Heart left ventricle (tissue), 16 donors: ENCODE measurements at regions of chr2 and their contacts with region 1.

Region 1: DNA sequence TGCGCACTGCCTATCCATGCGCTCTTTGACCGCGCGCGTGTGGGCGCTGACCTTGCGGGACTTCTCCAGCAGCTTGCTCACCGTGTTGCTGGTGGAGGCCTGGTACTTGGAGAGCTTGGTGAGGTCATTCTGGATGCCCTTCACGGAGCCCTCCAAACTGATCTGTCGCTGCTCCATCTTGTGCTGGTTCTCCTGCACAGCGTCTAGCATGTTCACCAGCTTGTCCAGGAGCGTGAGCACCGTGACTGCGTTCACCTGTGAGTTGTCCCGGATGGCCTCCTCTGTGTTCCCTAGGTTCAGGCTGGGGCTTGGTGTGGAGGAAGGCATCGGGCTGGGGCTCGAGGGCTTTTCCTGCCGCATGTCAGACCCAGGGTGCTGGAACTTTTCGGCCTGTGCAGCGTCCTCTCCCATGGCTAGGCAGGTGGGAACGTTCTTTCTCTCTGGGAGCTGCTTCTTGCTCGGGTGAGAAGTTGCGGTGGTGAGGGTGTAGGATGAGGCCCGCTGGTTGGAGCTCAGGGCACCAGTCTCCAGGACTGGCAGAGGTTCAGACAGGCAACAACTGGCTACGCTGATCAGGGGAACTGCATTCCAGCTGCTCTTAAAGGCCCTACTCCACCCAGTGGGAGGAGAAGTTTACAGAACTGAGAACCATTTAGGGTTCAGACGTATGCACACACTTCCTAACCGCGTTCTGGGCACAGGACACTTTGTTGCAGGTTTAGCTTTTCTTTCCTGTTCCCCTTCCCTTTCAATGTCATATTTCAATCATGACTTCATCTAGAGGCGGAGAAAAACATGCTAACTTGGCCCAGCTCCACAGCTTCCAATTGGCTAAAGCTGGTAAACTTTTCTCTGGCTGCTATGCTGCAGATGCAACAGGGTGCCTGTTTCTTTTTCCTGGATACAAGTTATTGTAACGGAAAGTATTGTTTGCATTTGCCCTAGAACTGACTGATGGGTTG is at the start of gene CAVIN2:
- DNase-seq: peak; percentile 74 to 85 (median 83)
- ATAC-seq: peak; percentile 85 to 92 (median 89)
- H3K4me3 ChIP-seq: peak within 1 kb of the TSS; percentile 52 to 85 (median 76)
- H3K27ac ChIP-seq: peak within 1 kb of the TSS; percentile 89 to 98 (median 96)
- H3K4me1 ChIP-seq: peaks cover 0 to 54% (median 32%) of the 10 kb centered on the region in 12 donors
- H3K27me3 ChIP-seq: no peaks in the 10 kb centered on the region
- CTCF ChIP-seq: peak in 5 of 12 donors; percentile 4 to 25 (median 11)
- POLR2A ChIP-seq: peak in 1 of 2 donors; percentile 81
- total RNA-seq, gene CAVIN2: 50.3 to 149 (median 113) TPM

Region 2: DNA sequence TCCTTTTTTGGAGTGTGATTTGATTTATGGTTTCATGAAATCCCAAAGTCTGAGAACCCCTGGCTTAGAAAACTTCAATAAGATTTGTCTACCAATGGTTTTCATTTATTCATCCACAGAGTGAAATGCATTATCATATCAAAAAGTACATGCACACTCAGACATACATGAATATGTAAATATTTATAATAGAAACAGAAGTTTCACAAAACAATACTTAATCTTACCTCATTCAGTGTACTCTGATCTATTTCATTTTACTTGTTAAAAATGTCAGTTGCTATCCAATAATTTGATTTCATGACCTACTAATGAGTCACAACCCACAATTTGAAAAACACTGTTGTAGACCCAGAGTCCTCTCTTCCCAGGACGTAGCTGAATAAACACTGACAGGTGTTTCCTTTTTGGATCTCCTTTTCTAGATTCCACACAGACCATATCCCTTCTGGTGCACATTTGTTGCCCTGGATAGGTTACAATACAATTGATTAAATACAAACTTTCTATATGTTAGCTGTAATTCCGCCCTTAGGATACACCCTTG is 10.5 kb after region 1 on chr2:
- intact Hi-C with region 1: no loop called
- DNase-seq: no peak
- ATAC-seq: peak in 1 of 4 donors; percentile 38
- H3K4me3 ChIP-seq: no peak overlapping the region
- H3K27ac ChIP-seq: no peak overlapping the region
- H3K4me1 ChIP-seq: peaks cover 2 to 46% (median 24%) of the 10 kb centered on the region in 12 donors
- H3K27me3 ChIP-seq: no peaks in the 10 kb centered on the region
- CTCF ChIP-seq: no peak
- POLR2A ChIP-seq: no peak

Region 3: GRCh38 chr2:191869178-191869577 is 22.4 kb after region 1 on chr2:
- intact Hi-C with region 1: loop called in 4 of 10 experiments (anchors 1 to 2 kb)
- DNase-seq: no peak
- ATAC-seq: no peak
- H3K4me3 ChIP-seq: no peak overlapping the region
- H3K27ac ChIP-seq: peak overlapping the region in 2 of 12 donors; percentile 38 to 69
- H3K4me1 ChIP-seq: peaks cover 12 to 51% (median 37%) of the 10 kb centered on the region in 12 donors
- H3K27me3 ChIP-seq: no peaks in the 10 kb centered on the region
- CTCF ChIP-seq: peak in 1 of 12 donors; percentile 23
- POLR2A ChIP-seq: no peak

Region 4: DNA sequence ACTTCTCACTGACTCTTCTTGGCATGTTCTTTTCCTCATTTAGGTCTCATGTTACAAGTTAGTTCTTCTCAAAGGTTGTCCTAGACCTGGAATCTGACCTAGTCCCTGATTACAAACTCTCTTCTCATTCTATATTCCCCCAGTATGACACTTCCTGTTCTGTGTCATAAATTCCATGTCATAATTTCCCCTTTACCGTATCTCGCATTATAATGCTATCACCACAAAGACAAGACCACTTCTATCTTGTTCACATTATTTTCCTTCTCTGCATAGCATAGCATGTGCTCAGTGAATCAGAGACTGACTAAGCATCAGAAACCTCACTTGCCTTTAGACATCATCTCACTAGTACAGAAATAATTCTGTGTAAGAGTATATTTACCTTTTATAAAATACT is 63.7 kb after region 1 on chr2:
- intact Hi-C with region 1: loop called in 2 of 10 experiments (anchors 5 kb)
- DNase-seq: no peak
- ATAC-seq: no peak
- H3K4me3 ChIP-seq: no peak overlapping the region
- H3K27ac ChIP-seq: no peak overlapping the region
- H3K4me1 ChIP-seq: peaks cover 0 to 12% (median 7%) of the 10 kb centered on the region in 12 donors
- H3K27me3 ChIP-seq: no peaks in the 10 kb centered on the region
- CTCF ChIP-seq: no peak
- POLR2A ChIP-seq: no peak

Region 5: GRCh38 chr2:192004188-192004963 is 157.6 kb after region 1 on chr2:
- intact Hi-C with region 1: loop called in 1 of 10 experiments (anchors 10 kb)
- DNase-seq: no peak
- ATAC-seq: no peak
- H3K4me3 ChIP-seq: no peak overlapping the region
- H3K27ac ChIP-seq: no peak overlapping the region
- H3K4me1 ChIP-seq: peaks cover 0 to 28% (median 11%) of the 10 kb centered on the region in 12 donors
- H3K27me3 ChIP-seq: no peaks in the 10 kb centered on the region
- CTCF ChIP-seq: no peak
- POLR2A ChIP-seq: no peak

Region 6: DNA sequence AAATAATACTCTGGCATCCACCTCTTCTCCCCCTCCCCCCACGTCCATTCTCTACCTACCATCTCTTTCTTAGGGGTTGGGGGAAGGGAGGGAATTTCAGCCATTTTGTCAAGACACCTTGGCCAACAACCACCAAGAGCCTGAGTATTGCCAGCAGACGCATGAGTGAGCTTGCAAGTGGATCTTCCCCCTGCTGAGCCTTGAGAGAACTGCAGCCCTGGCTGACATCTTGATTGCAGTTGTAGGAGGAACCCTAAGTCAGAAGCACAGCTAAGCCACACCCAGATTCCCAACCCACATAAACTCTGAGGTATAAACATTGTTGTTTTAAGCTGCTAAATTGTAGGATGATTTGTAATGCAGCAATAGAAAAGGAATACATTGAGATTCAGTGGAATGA is 182.3 kb after region 1 on chr2:
- intact Hi-C with region 1: loop called in 2 of 10 experiments (anchors 2 to 10 kb)
- DNase-seq: no peak
- ATAC-seq: no peak
- H3K4me3 ChIP-seq: no peak overlapping the region
- H3K27ac ChIP-seq: no peak overlapping the region
- H3K4me1 ChIP-seq: peaks cover 0 to 23% (median 12%) of the 10 kb centered on the region in 12 donors
- H3K27me3 ChIP-seq: no peaks in the 10 kb centered on the region
- CTCF ChIP-seq: peak in 1 of 12 donors; percentile 3
- POLR2A ChIP-seq: no peak